ENCODE measurements at regions of chr13 and their contacts with region 1.

Region 1: DNA sequence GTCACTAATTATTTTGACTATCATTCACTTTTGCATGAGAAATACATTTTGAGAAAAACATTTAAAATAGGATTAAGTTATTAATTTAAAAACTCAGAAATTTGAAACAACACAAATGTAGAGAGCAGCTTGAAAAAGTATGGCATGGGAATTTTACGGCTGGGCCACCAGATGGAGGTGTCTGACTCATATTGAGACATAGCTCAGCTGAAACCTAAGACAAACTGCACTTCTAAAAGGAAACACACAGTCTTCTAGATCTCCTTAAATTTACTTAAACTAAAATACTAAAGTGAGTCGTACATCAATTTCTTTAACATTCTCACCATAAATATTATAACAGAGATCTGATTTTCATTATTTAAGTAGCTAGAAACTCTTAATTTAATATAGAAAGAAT is 41.9 kb upstream of the POSTN start:
- DNase-seq: no peak
- H3K4me3 ChIP-seq: no peak overlapping the region
- CTCF ChIP-seq: peak; percentile 50

Region 2: DNA sequence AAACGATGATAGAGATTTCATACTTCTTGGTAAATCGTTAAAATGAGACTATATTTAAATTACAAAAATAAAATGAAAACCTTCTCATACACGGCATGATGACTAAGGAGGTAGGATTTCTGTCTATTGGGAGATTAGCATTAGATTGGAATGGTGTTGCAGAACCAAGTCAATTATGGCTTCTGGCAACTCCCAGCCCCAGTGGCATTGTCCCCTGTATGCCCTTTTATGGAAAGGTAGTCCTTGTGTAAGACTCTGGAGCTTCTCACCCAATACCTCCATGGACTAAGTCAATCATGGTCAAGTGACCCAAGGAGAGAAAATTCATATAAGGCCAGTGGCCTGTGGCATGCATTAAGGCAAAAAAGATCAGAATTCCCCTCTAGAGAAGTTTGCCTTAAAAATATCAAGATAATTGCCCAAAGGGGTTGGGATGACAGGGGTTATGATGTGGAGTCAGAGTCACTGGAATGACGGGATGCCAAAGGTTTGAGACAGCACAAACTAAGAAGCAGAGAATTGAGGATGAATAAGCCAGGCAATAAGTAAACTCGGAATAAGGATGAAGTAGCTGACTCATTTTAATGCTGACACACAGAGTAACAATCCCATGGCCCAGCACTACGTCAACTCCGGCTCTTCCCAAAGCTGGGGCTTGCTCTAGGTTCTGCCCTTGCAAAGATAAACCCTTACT is 15.9 kb after region 1 on chr13:
- CTCF ChIA-PET with region 1: interaction called, 10 read pairs
- POLR2A ChIA-PET with region 1: no interaction called
- DNase-seq: peak; percentile 98
- H3K4me3 ChIP-seq: no peak overlapping the region
- CTCF ChIP-seq: no peak

Region 3: DNA sequence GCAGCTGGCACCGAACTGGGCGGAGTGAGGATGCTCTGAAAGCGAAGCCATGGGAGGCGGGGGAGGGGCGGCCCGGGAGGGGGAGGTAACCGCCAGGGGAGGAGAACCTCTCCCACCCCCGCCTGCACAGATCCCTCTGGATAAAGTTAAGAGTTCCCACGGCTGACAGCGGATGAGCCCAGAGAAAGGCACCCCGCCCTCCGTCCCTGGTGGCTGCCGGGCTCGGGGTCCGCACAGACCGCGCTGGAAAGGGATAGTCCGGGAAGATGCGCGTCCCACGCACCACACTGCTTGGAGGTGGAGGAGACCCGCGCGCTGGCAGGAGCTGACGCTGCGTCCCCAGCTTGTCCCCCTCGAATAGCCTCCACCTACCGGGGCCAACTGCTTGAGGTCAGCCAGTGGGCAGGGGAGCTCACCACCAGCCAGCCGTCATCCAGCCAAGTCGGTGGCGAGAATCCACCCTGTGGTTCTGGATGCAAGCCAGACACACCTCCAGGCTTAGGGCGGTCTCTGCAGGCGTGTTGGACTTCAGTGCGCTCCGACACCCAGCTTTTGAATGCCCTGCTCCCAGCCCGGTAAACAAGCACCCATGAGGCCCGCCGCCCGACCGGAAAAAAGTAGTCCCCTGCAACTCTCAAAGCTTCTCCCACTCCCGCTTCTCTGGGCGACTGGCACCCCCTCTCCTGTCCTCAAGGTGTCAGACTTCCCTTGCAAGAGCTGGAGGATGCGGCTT is 229.4 kb after region 1 on chr13 and contains the start of gene TRPC4:
- CTCF ChIA-PET with region 1: interaction called, 22 read pairs
- POLR2A ChIA-PET with region 1: no interaction called
- DNase-seq: no peak
- H3K4me3 ChIP-seq: peak within 1 kb of the TSS; percentile 86
- CTCF ChIP-seq: peak; percentile 67

Region 4: DNA sequence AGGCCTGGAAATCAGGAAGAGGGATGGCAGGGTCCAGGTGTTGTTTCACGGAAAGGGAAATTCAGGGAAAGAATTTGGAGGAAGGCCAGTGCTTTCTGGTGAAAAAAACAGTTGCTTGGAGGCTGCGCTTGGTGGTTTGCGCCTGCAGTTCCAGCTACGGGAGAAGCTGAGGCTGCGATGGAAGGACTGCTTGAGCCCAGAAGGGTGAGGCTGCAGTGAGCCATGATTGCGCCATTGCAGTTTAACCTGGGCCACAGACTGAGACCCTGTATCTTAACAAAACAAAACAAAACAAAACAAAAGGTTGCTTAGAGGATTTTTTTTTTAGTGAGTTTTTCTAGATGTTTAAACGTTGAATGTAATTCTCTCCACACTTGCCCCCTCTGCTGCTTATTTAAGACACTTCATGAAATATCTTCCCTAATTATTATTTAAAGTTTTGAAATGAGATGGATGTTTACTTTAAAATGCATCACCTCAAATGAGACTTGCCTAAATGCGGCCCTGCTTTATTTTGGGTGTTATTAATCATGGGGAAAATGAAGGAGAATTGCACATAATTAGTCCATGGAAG is 304.5 kb after region 1 on chr13:
- CTCF ChIA-PET with region 1: interaction called, 12 read pairs
- POLR2A ChIA-PET with region 1: no interaction called
- DNase-seq: no peak
- H3K4me3 ChIP-seq: no peak overlapping the region
- CTCF ChIP-seq: no peak

Region 5: GRCh38 chr13:38045307-38046048 is 405.0 kb after region 1 on chr13:
- CTCF ChIA-PET with region 1: interaction called, 19 read pairs
- POLR2A ChIA-PET with region 1: no interaction called
- DNase-seq: no peak
- H3K4me3 ChIP-seq: no peak overlapping the region
- CTCF ChIP-seq: peak; percentile 65

Region 6: DNA sequence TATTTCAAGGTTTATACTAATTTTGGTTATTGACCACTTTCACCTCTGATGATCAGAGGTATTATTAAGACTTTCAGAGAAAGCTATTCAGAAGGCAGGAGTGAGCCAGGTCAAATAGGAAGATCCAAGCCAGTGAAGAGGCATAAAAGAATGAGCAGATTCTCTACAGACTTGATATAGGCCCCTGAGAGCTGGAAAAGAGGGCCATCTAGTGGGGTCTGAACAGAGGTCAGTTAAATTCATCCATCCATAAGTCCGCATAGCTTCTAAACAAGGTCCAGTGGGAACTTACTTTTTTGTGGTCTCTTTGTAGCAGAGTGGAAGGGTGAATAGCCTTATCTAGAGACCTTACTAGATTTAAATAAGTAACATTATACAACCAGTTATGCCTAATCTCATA is 582.6 kb after region 1 on chr13:
- CTCF ChIA-PET with region 1: interaction called, 23 read pairs
- POLR2A ChIA-PET with region 1: no interaction called
- DNase-seq: no peak
- H3K4me3 ChIP-seq: no peak overlapping the region
- CTCF ChIP-seq: peak; percentile 33